Posterior cingulate gyrus (tissue), 11 donors: ENCODE measurements at regions of chr1 and their contacts with region 1.

Region 1: DNA sequence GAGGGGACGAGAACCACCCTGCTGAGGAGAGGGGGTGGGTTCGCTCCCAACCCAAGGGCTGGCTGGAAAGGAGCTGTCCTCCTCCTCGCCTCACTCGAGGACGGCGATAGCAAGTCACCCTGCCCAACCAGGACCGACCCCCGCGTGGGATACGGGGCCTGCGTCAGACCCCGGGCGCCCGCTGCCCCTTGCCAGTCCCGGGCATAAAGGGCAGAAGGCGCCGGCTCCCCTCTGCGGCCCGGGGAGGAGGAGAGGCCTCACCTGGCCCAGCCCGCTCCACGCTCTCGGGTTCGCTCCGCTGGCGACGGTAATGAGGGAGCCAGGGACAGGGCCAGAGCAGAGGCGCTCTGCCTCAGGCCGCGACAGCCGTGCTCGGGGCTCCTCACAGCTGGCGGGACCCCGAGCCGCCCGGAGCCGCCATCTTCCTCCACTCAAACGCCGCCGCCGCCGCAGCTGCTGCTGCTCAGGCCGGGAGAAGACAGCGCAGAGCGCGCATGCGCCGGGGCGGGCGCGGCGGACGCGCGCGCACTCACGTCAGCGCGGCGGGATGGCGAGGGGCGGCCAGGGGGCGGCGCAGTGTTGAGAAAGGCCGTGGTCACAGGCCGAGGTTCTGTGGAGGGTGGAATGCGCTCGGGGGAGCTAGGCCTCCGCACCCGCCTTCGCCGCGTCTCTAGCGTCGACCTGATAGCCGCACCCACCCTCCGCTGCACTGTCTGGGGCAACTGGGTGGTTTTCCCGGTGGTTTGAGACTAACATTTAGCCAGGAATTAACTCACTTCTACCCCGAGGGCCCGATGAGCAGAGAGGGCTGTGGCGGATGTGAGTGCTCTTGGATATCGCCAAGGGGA is at the start of gene FBXO42:
- DNase-seq: peak; percentile 82 to 98 (median 88)

Region 2: DNA sequence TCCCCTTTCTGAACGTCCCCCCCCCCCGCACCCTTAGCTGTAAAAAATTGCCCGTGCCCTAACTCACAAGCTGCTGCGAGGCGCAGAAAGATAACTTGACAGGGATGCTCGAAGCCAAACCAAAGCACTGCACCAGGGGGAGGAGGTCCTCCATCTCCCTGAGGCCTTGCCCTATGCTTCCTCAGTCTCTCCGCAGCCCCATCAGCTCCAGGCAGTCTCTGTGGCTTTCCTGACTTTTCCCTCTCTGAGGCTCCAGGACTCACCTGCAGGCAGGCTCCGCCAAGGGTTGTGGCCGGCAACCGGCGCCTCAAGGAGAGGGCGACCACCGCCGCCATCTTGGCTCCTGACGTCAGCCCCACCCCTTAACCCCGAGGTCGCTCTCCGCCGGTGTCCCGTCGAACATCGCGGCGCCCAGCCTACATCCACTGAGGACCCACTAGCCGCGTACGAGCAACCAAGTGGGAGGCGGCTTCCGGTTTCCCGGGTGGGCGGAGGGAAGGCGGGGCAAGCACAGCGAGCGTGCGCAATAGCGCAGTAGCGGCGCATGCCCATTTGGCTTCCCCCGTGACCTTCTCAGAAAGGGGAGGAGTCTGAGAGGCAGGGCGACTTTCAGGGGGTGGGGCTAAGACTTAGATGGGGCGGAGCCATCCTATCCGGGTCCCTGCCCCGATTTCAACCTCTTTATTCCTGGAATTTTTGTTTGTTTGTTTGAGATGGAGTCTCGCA is 701.6 kb after region 1 on chr1 and contains the start of gene SDHB:
- intact Hi-C with region 1: loop called (anchors 10 kb)
- DNase-seq: peak; percentile 98 to 100 (median 99)